ENCODE measurements at regions of chr15 and their contacts with region 1.

Region 1: GRCh38 chr15:51726351-51727073 is 10.9 kb downstream of the LYSMD2 start:
- DNase-seq: peak; percentile 74
- H3K4me3 Mint-ChIP-seq: no peak overlapping the region
- H3K27ac Mint-ChIP-seq: no peak overlapping the region
- H3K4me1 Mint-ChIP-seq: peaks cover 57% of the 10 kb centered on the region
- H3K27me3 Mint-ChIP-seq: no peaks in the 10 kb centered on the region

Region 2: DNA sequence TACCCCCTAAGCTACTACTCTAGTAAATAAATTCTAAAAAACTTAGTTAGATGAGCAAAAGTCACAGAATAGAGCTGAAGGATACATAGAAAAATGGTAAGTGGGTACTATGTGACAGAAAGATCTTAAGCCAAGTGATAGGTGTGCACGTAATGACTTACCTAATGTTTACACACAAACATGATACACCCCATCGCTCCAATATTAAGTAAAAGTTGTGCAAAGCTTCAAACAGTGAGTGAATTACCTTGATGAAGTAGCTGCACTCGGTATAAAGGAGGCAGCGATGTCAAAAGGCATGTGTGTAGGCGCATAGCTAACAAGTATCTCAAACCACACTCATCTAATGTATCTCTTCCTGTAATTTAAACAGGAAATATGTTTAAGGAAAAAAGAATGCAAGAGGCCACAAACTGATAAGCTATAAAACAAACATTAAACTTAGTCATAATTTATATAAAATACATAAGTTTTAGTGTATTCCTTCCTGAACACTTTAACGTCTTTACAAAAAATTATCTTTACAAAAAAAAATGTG is 231.7 kb before region 1 on chr15:
- CTCF ChIA-PET with region 1: no interaction called
- intact Hi-C with region 1: no loop called
- DNase-seq: no peak
- H3K4me3 Mint-ChIP-seq: no peak overlapping the region
- H3K27ac Mint-ChIP-seq: no peak overlapping the region
- H3K4me1 Mint-ChIP-seq: no peaks in the 10 kb centered on the region
- H3K27me3 Mint-ChIP-seq: no peaks in the 10 kb centered on the region

Region 3: GRCh38 chr15:51622604-51623370 is 103.7 kb before region 1 on chr15 and contains the start of gene DMXL2:
- CTCF ChIA-PET with region 1: no interaction called
- intact Hi-C with region 1: loop called (anchors 2 kb)
- DNase-seq: peak; percentile 76
- H3K4me3 Mint-ChIP-seq: peak within 1 kb of the TSS; percentile 76
- H3K27ac Mint-ChIP-seq: peak within 1 kb of the TSS; percentile 6
- H3K4me1 Mint-ChIP-seq: peaks cover 19% of the 10 kb centered on the region
- H3K27me3 Mint-ChIP-seq: no peaks in the 10 kb centered on the region
- total RNA-seq, gene DMXL2: 10.0 TPM

Region 4: GRCh38 chr15:51681303-51681963 is 45.1 kb before region 1 on chr15 and contains the start of gene SCG3:
- CTCF ChIA-PET with region 1: no interaction called
- intact Hi-C with region 1: loop called (anchors 2 kb)
- DNase-seq: peak; percentile 86
- H3K4me3 Mint-ChIP-seq: peak within 1 kb of the TSS; percentile 22
- H3K27ac Mint-ChIP-seq: no peak within 1 kb of the TSS
- H3K4me1 Mint-ChIP-seq: peaks cover 5% of the 10 kb centered on the region
- H3K27me3 Mint-ChIP-seq: peaks cover 36% of the 10 kb centered on the region
- total RNA-seq, gene SCG3: not detected

Region 5: DNA sequence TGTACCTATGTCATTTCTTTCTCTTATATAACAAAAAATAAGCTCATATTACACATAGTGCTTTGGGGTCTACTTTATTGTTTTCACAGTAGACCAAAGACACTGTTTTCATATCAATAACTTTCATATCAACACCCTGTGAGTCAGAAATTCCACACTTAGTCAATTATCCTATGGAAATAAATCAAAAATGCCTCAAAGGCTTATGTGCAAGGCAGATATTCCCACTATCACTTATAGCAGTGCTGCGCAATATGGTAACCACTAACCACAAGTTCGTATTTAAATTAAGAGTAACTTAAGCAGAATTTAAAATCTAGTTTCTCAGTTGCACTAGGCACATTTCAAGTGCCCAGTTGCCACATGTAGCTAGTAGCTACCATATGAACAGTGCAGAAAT is 29.3 kb before region 1 on chr15:
- CTCF ChIA-PET with region 1: no interaction called
- intact Hi-C with region 1: no loop called
- DNase-seq: no peak
- H3K4me3 Mint-ChIP-seq: no peak overlapping the region
- H3K27ac Mint-ChIP-seq: no peak overlapping the region
- H3K4me1 Mint-ChIP-seq: peaks cover 6% of the 10 kb centered on the region
- H3K27me3 Mint-ChIP-seq: no peaks in the 10 kb centered on the region

Measured in activated naive CD4-positive, alpha-beta T cell treated with anti-CD3 and anti-CD28 coated beads for 36 hours (primary cell).